Activated CD4-positive, alpha-beta memory T cell treated with anti-CD3 and anti-CD28 coated beads for 36 hours (primary cell): ENCODE measurements at regions of chr6 and their contacts with region 1.

Region 1: GRCh38 chr6:26607434-26608230 is 10.9 kb downstream of the ABT1 start:
- DNase-seq: peak; percentile 73
- H3K4me3 Mint-ChIP-seq: peak overlapping the region; percentile 50
- H3K27ac Mint-ChIP-seq: peak overlapping the region; percentile 16
- H3K4me1 Mint-ChIP-seq: peaks cover 21% of the 10 kb centered on the region
- H3K27me3 Mint-ChIP-seq: no peaks in the 10 kb centered on the region

Region 2: DNA sequence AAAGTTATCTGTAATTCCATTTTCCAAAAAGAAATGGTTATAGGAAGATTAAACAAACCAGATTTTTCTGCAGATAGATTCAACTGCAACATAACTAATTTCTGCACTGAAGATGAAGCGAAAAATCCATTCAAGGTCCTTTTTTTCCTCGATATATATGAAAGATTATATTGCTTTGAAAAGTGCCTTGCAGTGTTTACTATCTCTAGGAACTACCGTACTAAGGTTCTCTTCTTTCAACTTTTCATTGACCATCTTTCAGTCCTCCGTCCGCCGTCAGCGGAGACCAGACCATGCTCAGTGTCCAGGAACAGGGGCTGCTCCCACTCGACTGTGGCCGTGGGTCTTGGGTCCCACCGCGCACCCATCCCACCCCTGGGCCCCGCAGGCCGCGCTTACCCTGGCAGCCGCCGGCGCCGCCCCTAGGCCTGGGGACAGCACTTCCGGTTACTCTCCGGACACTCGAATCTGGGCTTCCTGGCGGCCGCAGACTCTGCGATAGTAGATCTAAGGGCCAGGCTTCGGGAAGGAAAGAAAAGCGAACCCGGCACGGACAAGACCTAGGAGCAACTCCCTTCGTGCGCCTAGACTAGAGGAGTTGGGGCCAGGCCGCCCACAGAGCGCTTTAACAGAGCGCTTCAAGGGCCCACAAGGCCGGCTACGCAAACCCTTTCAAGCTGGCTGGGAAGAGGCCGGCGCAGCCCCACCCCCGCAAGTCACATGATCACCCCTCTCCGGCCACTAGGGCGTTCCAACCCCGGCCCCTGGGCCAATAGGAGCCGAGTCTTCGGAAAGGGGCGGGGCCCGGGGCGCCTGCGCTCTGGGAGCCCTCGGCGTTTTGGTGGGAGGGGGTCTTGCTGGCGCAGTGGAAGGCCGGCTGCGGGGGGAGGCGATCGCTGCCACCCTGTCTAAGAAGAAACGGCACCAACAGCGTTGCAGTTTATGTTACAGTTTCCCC is 51.7 kb after region 1 on chr6 and contains the start of gene ZNF322:
- CTCF ChIA-PET with region 1: interaction called, 4 read pairs
- POLR2A ChIA-PET with region 1: no interaction called
- intact Hi-C with region 1: loop called (anchors 2 kb)
- DNase-seq: peak; percentile 94
- H3K4me3 Mint-ChIP-seq: peak within 1 kb of the TSS; percentile 73
- H3K27ac Mint-ChIP-seq: peak within 1 kb of the TSS; percentile 10
- H3K4me1 Mint-ChIP-seq: peaks cover 16% of the 10 kb centered on the region
- H3K27me3 Mint-ChIP-seq: peaks cover 15% of the 10 kb centered on the region
- total RNA-seq, gene ZNF322: 10.4 to 11.3 TPM

Region 3: GRCh38 chr6:27078734-27079357 is 471.2 kb after region 1 on chr6:
- CTCF ChIA-PET with region 1: interaction called, 12 read pairs
- POLR2A ChIA-PET with region 1: no interaction called
- intact Hi-C with region 1: loop called (anchors 1 kb)
- DNase-seq: peak; percentile 60
- H3K4me3 Mint-ChIP-seq: peak overlapping the region; percentile 62
- H3K27ac Mint-ChIP-seq: no peak overlapping the region
- H3K4me1 Mint-ChIP-seq: peaks cover 3% of the 10 kb centered on the region
- H3K27me3 Mint-ChIP-seq: peaks cover 27% of the 10 kb centered on the region